MCF 10A (cell line): ENCODE measurements at regions of chr6 and their contacts with region 1.

Region 1: GRCh38 chr6:52995913-52996645 is 995 bp upstream of the GSTA4 start:
- DNase-seq: peak; percentile 82
- H3K4me3 Mint-ChIP-seq: peak overlapping the region; percentile 89
- H3K27ac Mint-ChIP-seq: peak overlapping the region; percentile 99
- H3K4me1 Mint-ChIP-seq: peaks cover 23% of the 10 kb centered on the region
- H3K27me3 Mint-ChIP-seq: no peaks in the 10 kb centered on the region
- CTCF ChIP-seq: no peak

Region 2: GRCh38 chr6:52839119-52840055 is 156.7 kb before region 1 on chr6:
- CTCF ChIA-PET with region 1: interaction called, 3 read pairs
- POLR2A ChIA-PET with region 1: no interaction called
- intact Hi-C with region 1: loop called (anchors 2 kb)
- DNase-seq: peak; percentile 81
- H3K4me3 Mint-ChIP-seq: no peak overlapping the region
- H3K27ac Mint-ChIP-seq: no peak overlapping the region
- H3K4me1 Mint-ChIP-seq: no peaks in the 10 kb centered on the region
- H3K27me3 Mint-ChIP-seq: peaks cover 12% of the 10 kb centered on the region
- CTCF ChIP-seq: peak; percentile 61

Region 3: DNA sequence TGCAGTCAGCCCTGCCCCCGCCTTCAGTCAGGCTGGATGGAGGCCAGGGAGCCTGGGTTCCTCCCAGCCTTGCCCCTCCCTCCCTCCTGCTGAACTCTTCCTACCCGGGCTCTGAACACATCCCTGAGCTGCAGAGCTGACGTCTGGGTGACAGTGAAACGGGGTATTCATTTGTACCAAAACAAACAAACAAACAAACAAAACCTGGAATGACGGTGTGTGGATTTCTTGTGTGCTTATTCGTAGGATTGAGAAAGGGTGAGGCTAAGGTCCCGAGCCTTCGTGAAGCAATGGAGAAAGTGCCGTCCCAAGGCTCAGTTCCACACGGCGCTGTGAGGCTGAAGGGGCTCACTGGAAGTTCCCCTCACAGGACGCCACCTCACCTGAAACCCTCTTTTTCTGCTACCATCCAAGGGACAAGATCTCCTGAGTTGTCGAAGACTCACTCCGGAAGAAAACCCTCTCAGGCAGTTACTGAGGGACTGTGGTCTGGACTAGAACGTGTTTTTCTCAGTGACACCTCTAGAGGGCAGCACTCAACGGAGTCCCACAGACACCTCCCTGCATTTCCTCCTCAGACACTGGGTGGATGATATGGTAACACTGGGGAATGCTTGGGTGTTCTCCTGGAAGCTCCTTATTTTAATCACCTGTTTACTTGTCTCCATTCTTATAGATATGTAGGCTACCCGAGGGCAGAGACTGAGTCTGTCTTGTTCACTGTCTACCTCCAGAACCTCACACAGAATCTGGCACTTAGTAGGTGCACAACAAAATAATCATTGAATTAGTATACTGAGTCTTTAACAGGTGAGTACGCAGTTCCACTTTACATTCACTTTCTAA is 113.9 kb before region 1 on chr6:
- CTCF ChIA-PET with region 1: interaction called, 28 read pairs
- POLR2A ChIA-PET with region 1: interaction called, 23 read pairs
- intact Hi-C with region 1: loop called (anchors 1 kb)
- DNase-seq: peak; percentile 83
- H3K4me3 Mint-ChIP-seq: peak overlapping the region; percentile 78
- H3K27ac Mint-ChIP-seq: no peak overlapping the region
- H3K4me1 Mint-ChIP-seq: peaks cover 6% of the 10 kb centered on the region
- H3K27me3 Mint-ChIP-seq: peaks cover 21% of the 10 kb centered on the region
- CTCF ChIP-seq: peak; percentile 71

Region 4: GRCh38 chr6:52922161-52922560 is 73.9 kb before region 1 on chr6:
- CTCF ChIA-PET with region 1: interaction called, 9 read pairs
- POLR2A ChIA-PET with region 1: interaction called, 35 read pairs
- intact Hi-C with region 1: loop called (anchors 5 kb)
- DNase-seq: no peak
- H3K4me3 Mint-ChIP-seq: no peak overlapping the region
- H3K27ac Mint-ChIP-seq: no peak overlapping the region
- H3K4me1 Mint-ChIP-seq: peaks cover 21% of the 10 kb centered on the region
- H3K27me3 Mint-ChIP-seq: no peaks in the 10 kb centered on the region
- CTCF ChIP-seq: no peak

Region 5: DNA sequence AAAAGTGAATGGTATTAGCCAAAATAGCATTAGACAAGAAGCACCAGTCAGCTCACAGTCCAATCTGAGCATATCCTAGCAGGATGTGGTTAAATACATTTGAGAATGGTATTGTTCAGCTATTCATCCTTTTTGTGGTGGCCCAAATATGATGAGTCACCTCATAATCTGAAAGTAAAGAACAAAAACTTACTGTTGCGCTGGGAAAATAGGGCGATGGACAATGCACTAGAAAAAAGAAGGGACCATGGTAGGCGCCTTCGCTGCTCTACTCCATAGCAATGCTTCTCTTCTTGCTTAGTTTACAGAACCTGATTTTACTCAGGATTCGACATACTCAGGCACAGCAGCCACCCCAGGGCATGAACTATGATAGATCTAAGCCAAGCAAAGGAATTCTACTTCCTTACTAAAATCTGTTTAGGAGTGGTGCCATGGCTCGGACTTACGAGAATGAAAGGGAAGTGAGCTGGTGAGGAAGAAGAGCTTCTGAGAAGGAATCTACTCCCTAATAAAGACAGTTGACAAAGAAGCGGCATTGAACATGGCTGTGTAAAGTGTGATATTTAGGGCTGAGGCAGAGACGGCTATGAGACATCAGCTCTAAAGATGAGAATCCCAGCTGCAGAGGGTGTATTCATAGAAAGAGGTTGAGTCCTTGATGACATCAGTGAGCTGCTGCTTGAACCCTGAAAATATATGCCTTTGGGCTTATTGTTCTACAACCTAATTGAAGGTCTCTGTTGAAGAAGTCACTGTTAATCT is 52.5 kb after region 1 on chr6:
- CTCF ChIA-PET with region 1: interaction called, 6 read pairs
- POLR2A ChIA-PET with region 1: interaction called, 8 read pairs
- intact Hi-C with region 1: loop called (anchors 1 kb)
- DNase-seq: peak; percentile 72
- H3K4me3 Mint-ChIP-seq: peak overlapping the region; percentile 69
- H3K27ac Mint-ChIP-seq: peak overlapping the region; percentile 88
- H3K4me1 Mint-ChIP-seq: peaks cover 21% of the 10 kb centered on the region
- H3K27me3 Mint-ChIP-seq: no peaks in the 10 kb centered on the region
- CTCF ChIP-seq: no peak

Region 6: GRCh38 chr6:53139841-53140413 is 143.8 kb after region 1 on chr6:
- CTCF ChIA-PET with region 1: no interaction called
- POLR2A ChIA-PET with region 1: no interaction called
- intact Hi-C with region 1: no loop called
- DNase-seq: no peak
- H3K4me3 Mint-ChIP-seq: no peak overlapping the region
- H3K27ac Mint-ChIP-seq: no peak overlapping the region
- H3K4me1 Mint-ChIP-seq: no peaks in the 10 kb centered on the region
- H3K27me3 Mint-ChIP-seq: no peaks in the 10 kb centered on the region
- CTCF ChIP-seq: no peak

Region 7: DNA sequence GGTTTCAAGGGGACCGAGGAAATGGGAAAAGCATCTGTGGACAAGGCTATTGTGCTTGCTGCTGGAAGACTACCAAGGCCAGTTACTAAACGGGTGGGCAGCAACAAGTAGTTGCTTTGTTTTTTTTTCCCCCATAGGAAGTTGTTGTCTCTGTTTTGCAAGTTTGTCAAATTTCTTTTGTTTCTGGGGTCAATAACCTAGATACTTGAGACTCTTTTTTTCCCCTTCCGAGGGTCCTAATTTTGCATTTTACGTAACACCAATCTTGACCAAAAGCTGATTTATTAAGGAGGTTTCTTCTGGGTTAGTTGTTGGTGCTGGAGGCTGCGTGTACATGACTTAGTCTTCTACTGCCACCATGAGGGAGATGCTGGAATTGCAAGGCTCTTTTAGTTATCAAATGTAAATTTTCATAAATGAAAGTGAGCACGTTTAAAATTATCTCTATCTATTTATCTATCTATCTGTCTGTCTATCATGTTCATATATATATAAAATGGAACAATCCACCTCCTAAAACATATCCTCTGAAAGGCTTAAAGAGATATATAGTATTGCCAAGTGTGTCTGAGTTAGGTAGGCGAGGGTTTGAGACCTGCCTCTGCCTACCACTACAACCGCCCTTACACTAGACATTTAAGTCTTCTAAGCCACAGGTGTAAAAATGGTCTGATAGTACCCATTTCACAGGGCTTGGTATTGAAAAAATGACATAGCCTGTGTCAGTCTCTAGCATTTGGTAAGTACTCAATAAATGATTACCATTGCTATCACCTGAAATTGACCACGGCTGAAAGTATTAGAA is 488.6 kb after region 1 on chr6:
- CTCF ChIA-PET with region 1: no interaction called
- POLR2A ChIA-PET with region 1: no interaction called
- intact Hi-C with region 1: loop called (anchors 5 kb)
- DNase-seq: peak; percentile 76
- H3K4me3 Mint-ChIP-seq: no peak overlapping the region
- H3K27ac Mint-ChIP-seq: no peak overlapping the region
- H3K4me1 Mint-ChIP-seq: peaks cover 16% of the 10 kb centered on the region
- H3K27me3 Mint-ChIP-seq: no peaks in the 10 kb centered on the region
- CTCF ChIP-seq: peak; percentile 93